ENCODE measurements at regions of chr4 and their contacts with region 1.

Region 1: DNA sequence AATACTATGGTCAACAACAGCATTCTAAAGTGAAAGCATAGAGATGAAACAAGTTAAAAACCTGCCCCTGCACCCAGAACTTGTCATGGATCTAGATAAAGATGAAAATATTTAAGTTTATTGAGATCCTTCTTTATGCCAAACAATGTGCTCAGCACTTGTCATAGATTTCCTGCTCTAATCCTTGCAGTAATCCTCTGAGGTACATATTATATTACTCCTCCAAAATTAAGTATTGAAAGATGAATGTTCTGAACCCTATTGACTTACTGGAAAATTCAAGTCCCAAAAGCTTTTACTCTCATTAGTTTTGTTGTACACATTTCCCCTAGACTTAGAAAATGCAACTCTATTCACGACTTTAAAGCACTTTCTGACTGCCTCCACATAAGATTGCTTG is 35.6 kb downstream of the CAMK2D start:
- DNase-seq: no peak
- ATAC-seq: no peak
- H3K4me3 ChIP-seq: no peak overlapping the region
- H3K4me3 Mint-ChIP-seq: peak overlapping the region in 1 of 10 donors; percentile 11
- H3K27ac ChIP-seq: no peak overlapping the region
- H3K27ac Mint-ChIP-seq: peak overlapping the region in 1 of 9 donors; percentile 23
- H3K4me1 ChIP-seq: peaks cover 7 to 13% of the 10 kb centered on the region in 2 donors
- H3K4me1 Mint-ChIP-seq: peaks cover 27 to 75% (median 62%) of the 10 kb centered on the region in 7 donors
- H3K27me3 ChIP-seq: no peaks in the 10 kb centered on the region
- H3K27me3 Mint-ChIP-seq: no peaks in the 10 kb centered on the region

Region 2: DNA sequence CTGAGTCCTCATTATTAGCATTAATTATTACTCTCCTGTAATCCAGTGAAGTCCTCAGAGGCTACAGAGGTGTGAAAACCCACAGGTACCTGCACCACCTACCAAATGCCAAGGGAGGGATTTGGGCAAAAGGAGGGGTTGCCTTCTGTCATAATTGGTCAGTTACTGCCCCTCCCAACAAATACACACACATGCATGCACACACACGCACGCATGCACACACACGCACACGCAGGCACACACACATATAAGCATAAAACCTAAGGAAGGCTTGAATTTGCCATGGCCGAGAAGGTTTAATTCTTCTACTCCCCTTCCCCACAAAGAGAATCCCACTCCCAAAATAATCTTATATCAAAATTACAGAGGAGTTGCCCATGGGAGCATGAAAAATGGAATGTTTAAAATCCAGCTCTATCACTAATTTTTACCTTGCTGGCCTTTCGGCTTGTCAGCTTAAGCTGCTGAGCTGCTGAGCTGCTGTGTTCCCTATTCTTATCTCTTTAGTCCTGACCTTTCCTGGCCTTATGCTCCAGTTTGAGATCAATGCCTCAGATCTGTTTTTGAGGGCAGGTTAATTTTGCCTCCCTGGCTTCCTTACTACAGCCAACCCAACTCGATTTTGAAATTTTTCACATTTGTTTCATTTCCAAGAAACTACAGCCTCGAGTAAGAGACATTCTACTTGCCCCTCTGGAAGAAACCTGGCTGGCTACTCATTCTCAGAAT is 59.4 kb before region 1 on chr4:
- CTCF ChIA-PET with region 1: interaction called, 10 read pairs
- POLR2A ChIA-PET with region 1: no interaction called
- intact Hi-C with region 1: no loop called
- DNase-seq: no peak
- ATAC-seq: no peak
- H3K4me3 ChIP-seq: no peak overlapping the region
- H3K4me3 Mint-ChIP-seq: no peak overlapping the region
- H3K27ac ChIP-seq: no peak overlapping the region
- H3K27ac Mint-ChIP-seq: peak overlapping the region in 1 of 9 donors; percentile 36
- H3K4me1 ChIP-seq: no peaks in the 10 kb centered on the region
- H3K4me1 Mint-ChIP-seq: peaks cover 0 to 22% (median 4%) of the 10 kb centered on the region in 7 donors
- H3K27me3 ChIP-seq: no peaks in the 10 kb centered on the region
- H3K27me3 Mint-ChIP-seq: no peaks in the 10 kb centered on the region

Region 3: DNA sequence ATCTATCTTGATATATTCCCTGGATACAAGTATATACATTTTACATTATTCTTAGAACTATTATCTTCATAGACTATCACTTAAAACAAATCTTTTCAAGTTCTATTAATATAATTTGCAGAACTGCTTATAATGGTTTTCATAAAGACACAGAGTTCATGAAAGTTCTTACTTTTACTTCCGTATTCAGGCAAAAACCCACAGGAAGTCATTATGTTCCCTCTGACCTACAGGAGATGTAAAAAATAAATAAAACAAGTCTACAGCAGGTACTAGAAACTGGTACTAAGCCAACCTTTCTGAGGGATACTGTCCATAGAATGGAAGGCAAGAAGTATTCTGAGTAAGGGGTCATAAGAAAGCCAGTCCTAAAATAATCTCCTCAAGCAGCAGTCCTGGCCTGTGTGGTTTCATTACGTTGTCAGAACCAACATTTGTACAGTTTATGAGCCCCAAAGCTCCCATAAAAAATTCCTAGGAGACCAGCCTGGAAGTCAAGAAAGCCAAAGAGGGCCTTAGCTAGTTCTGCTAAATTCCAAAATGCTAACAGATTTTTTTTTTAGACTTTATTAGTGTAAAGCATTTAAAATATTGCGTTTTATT is 33.1 kb before region 1 on chr4:
- CTCF ChIA-PET with region 1: no interaction called
- POLR2A ChIA-PET with region 1: no interaction called
- intact Hi-C with region 1: loop called in 1 of 2 experiments (anchors 5 kb)
- DNase-seq: peak in 2 of 9 donors; percentile 10 to 29
- ATAC-seq: peak; percentile 53
- H3K4me3 ChIP-seq: peak overlapping the region; percentile 43
- H3K4me3 Mint-ChIP-seq: peak overlapping the region in 8 of 10 donors; percentile 41 to 62 (median 51)
- H3K27ac ChIP-seq: no peak overlapping the region
- H3K27ac Mint-ChIP-seq: peak overlapping the region in 7 of 9 donors; percentile 36 to 87 (median 57)
- H3K4me1 ChIP-seq: peaks cover 8 to 9% of the 10 kb centered on the region in 2 donors
- H3K4me1 Mint-ChIP-seq: peaks cover 13 to 43% (median 31%) of the 10 kb centered on the region in 7 donors
- H3K27me3 ChIP-seq: no peaks in the 10 kb centered on the region
- H3K27me3 Mint-ChIP-seq: no peaks in the 10 kb centered on the region

Region 4: GRCh38 chr4:113708250-113708649 is 17.7 kb before region 1 on chr4:
- CTCF ChIA-PET with region 1: interaction called, 4 read pairs
- POLR2A ChIA-PET with region 1: no interaction called
- intact Hi-C with region 1: loop called (anchors 2 kb)
- DNase-seq: no peak
- ATAC-seq: no peak
- H3K4me3 ChIP-seq: no peak overlapping the region
- H3K4me3 Mint-ChIP-seq: no peak overlapping the region
- H3K27ac ChIP-seq: no peak overlapping the region
- H3K27ac Mint-ChIP-seq: no peak overlapping the region
- H3K4me1 ChIP-seq: no peaks in the 10 kb centered on the region
- H3K4me1 Mint-ChIP-seq: peaks cover 9 to 50% (median 45%) of the 10 kb centered on the region in 7 donors
- H3K27me3 ChIP-seq: no peaks in the 10 kb centered on the region
- H3K27me3 Mint-ChIP-seq: no peaks in the 10 kb centered on the region

Region 5: GRCh38 chr4:113738251-113738650 is 12.3 kb after region 1 on chr4:
- CTCF ChIA-PET with region 1: no interaction called
- POLR2A ChIA-PET with region 1: no interaction called
- intact Hi-C with region 1: loop called (anchors 1 kb)
- DNase-seq: no peak
- ATAC-seq: no peak
- H3K4me3 ChIP-seq: no peak overlapping the region
- H3K4me3 Mint-ChIP-seq: no peak overlapping the region
- H3K27ac ChIP-seq: no peak overlapping the region
- H3K27ac Mint-ChIP-seq: no peak overlapping the region
- H3K4me1 ChIP-seq: peaks cover 0 to 13% of the 10 kb centered on the region in 2 donors
- H3K4me1 Mint-ChIP-seq: peaks cover 21 to 80% (median 53%) of the 10 kb centered on the region in 7 donors
- H3K27me3 ChIP-seq: no peaks in the 10 kb centered on the region
- H3K27me3 Mint-ChIP-seq: no peaks in the 10 kb centered on the region

Region 6: GRCh38 chr4:114137984-114138383 is 412.0 kb after region 1 on chr4:
- CTCF ChIA-PET with region 1: no interaction called
- POLR2A ChIA-PET with region 1: no interaction called
- intact Hi-C with region 1: no loop called
- DNase-seq: no peak
- ATAC-seq: no peak
- H3K4me3 ChIP-seq: no peak overlapping the region
- H3K4me3 Mint-ChIP-seq: no peak overlapping the region
- H3K27ac ChIP-seq: no peak overlapping the region
- H3K27ac Mint-ChIP-seq: no peak overlapping the region
- H3K4me1 ChIP-seq: no peaks in the 10 kb centered on the region
- H3K4me1 Mint-ChIP-seq: no peaks in the 10 kb centered on the region
- H3K27me3 ChIP-seq: no peaks in the 10 kb centered on the region
- H3K27me3 Mint-ChIP-seq: peaks cover 0 to 16% (median 0%) of the 10 kb centered on the region in 5 donors

Measured in naive thymus-derived CD4-positive, alpha-beta T cell (primary cell).